Naive thymus-derived CD4-positive, alpha-beta T cell (primary cell): ENCODE measurements at regions of chr11 and their contacts with region 1.

Region 1: DNA sequence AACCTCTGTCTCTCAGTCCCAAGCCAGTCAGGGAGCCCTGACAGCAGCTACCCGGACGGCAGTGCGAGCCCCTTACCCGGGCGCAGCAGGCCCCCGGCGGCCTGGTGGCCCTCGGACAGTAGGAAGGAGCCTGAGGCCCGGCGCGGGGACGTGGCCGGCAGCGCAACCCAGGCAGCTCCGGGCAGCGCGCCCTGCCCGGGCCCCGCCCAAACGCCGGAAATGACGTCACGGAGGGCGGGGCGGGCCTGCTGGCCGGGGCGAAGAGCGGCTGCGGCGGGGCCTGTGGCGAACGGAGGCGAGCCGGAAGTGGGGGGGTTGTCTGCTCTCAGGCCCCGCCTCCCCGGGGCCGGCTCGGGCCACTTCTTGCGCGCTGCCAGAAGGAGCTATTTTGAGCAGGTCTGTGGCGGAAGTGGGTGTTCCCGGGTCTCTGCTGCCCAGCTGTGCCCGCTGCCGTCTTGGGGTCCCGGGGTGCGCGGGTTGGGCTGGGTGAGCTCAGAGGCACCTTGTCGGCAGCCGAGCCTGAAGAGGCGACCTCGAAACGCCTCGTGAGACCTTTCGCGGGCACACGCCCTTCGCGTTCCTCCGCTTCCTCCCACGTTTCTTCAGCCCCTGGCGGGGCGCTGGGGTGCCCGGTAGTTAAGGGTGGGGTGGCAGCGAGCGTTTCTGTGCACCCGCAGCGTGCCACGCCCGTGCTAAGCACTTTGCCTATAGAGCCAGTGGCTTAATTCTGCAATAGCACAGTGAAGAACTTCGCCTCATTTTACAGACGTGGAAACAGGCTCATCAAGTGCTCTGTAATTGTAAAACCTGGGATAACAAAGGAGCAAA is at the start of gene C11orf24:
- DNase-seq: peak; percentile 87 to 98 (median 90)
- ATAC-seq: peak; percentile 94
- H3K4me3 ChIP-seq: peak within 1 kb of the TSS; percentile 77
- H3K4me3 Mint-ChIP-seq: peak within 1 kb of the TSS; percentile 88 to 99 (median 94)
- H3K27ac ChIP-seq: peak within 1 kb of the TSS; percentile 94
- H3K27ac Mint-ChIP-seq: peak within 1 kb of the TSS; percentile 94 to 99 (median 96)
- H3K4me1 ChIP-seq: peaks cover 11 to 12% of the 10 kb centered on the region in 2 donors
- H3K4me1 Mint-ChIP-seq: peaks cover 23 to 50% (median 44%) of the 10 kb centered on the region in 7 donors
- H3K27me3 ChIP-seq: no peaks in the 10 kb centered on the region
- H3K27me3 Mint-ChIP-seq: no peaks in the 10 kb centered on the region
- total RNA-seq, gene C11orf24: 9.5 to 20.0 (median 15.4) TPM

Region 2: DNA sequence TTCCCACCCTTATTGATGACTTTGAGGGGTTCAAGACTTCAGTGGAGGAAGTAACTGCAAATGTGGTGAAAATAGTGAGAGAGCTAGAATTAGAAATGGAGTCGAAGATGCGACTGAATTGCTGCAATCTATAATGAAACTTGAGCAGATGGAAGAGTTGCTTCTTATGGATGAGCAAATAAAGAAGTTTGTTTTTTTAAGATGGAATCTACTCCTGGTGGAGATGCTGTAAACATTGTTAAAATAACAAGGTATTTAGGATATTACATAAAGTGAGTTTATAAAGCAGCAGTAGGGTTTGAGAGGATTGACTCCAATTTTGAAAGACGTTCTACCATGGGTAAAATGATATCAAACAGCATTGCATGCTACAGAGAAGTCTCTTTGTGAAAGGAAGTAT is 1070.0 kb before region 1 on chr11:
- CTCF ChIA-PET with region 1: no interaction called
- POLR2A ChIA-PET with region 1: no interaction called
- intact Hi-C with region 1: no loop called
- DNase-seq: no peak
- ATAC-seq: no peak
- H3K4me3 ChIP-seq: no peak overlapping the region
- H3K4me3 Mint-ChIP-seq: no peak overlapping the region
- H3K27ac ChIP-seq: no peak overlapping the region
- H3K27ac Mint-ChIP-seq: peak overlapping the region in 6 of 9 donors; percentile 1 to 46 (median 32)
- H3K4me1 ChIP-seq: no peaks in the 10 kb centered on the region
- H3K4me1 Mint-ChIP-seq: peaks cover 0 to 3% (median 0%) of the 10 kb centered on the region in 7 donors
- H3K27me3 ChIP-seq: no peaks in the 10 kb centered on the region
- H3K27me3 Mint-ChIP-seq: no peaks in the 10 kb centered on the region

Region 3: GRCh38 chr11:68030318-68031138 is 241.5 kb before region 1 on chr11 and contains the start of gene NDUFS8:
- CTCF ChIA-PET with region 1: no interaction called
- POLR2A ChIA-PET with region 1: no interaction called
- intact Hi-C with region 1: loop called (anchors 1 to 10 kb)
- DNase-seq: peak; percentile 83 to 99 (median 98)
- ATAC-seq: peak; percentile 98
- H3K4me3 ChIP-seq: peak within 1 kb of the TSS; percentile 98
- H3K4me3 Mint-ChIP-seq: peak within 1 kb of the TSS; percentile 90 to 99 (median 96)
- H3K27ac ChIP-seq: peak within 1 kb of the TSS; percentile 97
- H3K27ac Mint-ChIP-seq: peak within 1 kb of the TSS; percentile 73 to 98 (median 92)
- H3K4me1 ChIP-seq: peaks cover 11 to 16% of the 10 kb centered on the region in 2 donors
- H3K4me1 Mint-ChIP-seq: peaks cover 12 to 32% (median 23%) of the 10 kb centered on the region in 7 donors
- H3K27me3 ChIP-seq: no peaks in the 10 kb centered on the region
- H3K27me3 Mint-ChIP-seq: no peaks in the 10 kb centered on the region
- total RNA-seq, gene NDUFS8: 67.1 to 126 (median 80.1) TPM

Region 4: GRCh38 chr11:68213555-68214174 is 58.3 kb before region 1 on chr11:
- CTCF ChIA-PET with region 1: no interaction called
- POLR2A ChIA-PET with region 1: no interaction called
- intact Hi-C with region 1: loop called in 1 of 2 experiments (anchors 1 kb)
- DNase-seq: peak; percentile 69 to 92 (median 86)
- ATAC-seq: peak; percentile 70
- H3K4me3 ChIP-seq: peak overlapping the region; percentile 81
- H3K4me3 Mint-ChIP-seq: peak overlapping the region; percentile 69 to 98 (median 78)
- H3K27ac ChIP-seq: peak overlapping the region; percentile 88
- H3K27ac Mint-ChIP-seq: peak overlapping the region in 7 of 9 donors; percentile 35 to 99 (median 92)
- H3K4me1 ChIP-seq: peaks cover 27% of the 10 kb centered on the region in 2 donors
- H3K4me1 Mint-ChIP-seq: peaks cover 35 to 50% (median 45%) of the 10 kb centered on the region in 7 donors
- H3K27me3 ChIP-seq: no peaks in the 10 kb centered on the region
- H3K27me3 Mint-ChIP-seq: peaks cover 0 to 28% (median 0%) of the 10 kb centered on the region in 5 donors

Region 5: GRCh38 chr11:68282141-68282970 is 10.4 kb after region 1 on chr11:
- CTCF ChIA-PET with region 1: no interaction called
- POLR2A ChIA-PET with region 1: interaction called, 8 read pairs
- intact Hi-C with region 1: loop called (anchors 1 kb)
- DNase-seq: peak in 5 of 9 donors; percentile 21 to 38 (median 31)
- ATAC-seq: peak; percentile 78
- H3K4me3 ChIP-seq: peak overlapping the region; percentile 18
- H3K4me3 Mint-ChIP-seq: peak overlapping the region; percentile 63 to 83 (median 74)
- H3K27ac ChIP-seq: no peak overlapping the region
- H3K27ac Mint-ChIP-seq: peak overlapping the region in 8 of 9 donors; percentile 14 to 87 (median 50)
- H3K4me1 ChIP-seq: peaks cover 13 to 14% of the 10 kb centered on the region in 2 donors
- H3K4me1 Mint-ChIP-seq: peaks cover 18 to 32% (median 25%) of the 10 kb centered on the region in 7 donors
- H3K27me3 ChIP-seq: no peaks in the 10 kb centered on the region
- H3K27me3 Mint-ChIP-seq: peaks cover 0 to 19% (median 2%) of the 10 kb centered on the region in 5 donors

Region 6: DNA sequence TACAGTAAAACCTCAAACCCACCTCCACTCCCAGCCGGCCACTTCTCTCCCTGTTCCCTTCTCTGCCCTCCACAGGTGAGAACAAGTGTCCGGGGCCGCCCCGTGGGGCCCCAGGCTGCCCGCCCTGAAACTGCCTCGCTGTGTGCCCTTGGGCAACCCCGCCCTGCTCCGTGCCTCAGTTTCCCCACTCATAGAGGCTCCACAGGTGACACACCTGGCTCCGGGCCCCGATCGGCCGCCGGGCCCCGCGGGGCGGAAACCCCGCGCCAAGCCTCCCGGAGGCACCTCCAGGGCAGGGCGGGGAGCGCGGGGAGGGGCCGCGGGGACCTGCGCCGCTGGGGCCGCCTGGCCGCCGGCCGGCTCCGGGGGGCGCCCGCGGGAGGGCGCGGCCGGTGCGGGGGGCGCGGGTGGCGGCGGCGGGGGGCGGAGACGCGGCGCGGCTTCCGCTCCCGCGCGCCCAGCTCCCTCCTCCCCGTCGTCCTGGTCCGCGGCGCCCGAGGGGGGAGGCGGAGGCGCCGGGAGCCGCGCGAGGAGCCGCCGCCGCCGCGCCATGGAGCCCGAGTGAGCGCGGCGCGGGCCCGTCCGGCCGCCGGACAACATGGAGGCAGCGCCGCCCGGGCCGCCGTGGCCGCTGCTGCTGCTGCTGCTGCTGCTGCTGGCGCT is 40.3 kb after region 1 on chr11 and contains the start of gene LRP5:
- CTCF ChIA-PET with region 1: interaction called, 3 read pairs
- POLR2A ChIA-PET with region 1: interaction called, 4 read pairs
- intact Hi-C with region 1: loop called in 1 of 2 experiments (anchors 5 kb)
- DNase-seq: peak in 1 of 9 donors; percentile 52
- ATAC-seq: peak; percentile 48
- H3K4me3 ChIP-seq: peak within 1 kb of the TSS; percentile 50
- H3K4me3 Mint-ChIP-seq: peak within 1 kb of the TSS; percentile 86 to 92 (median 88)
- H3K27ac ChIP-seq: no peak within 1 kb of the TSS
- H3K27ac Mint-ChIP-seq: peak within 1 kb of the TSS; percentile 35 to 87 (median 67)
- H3K4me1 ChIP-seq: peaks cover 8 to 22% of the 10 kb centered on the region in 2 donors
- H3K4me1 Mint-ChIP-seq: peaks cover 14 to 47% (median 31%) of the 10 kb centered on the region in 7 donors
- H3K27me3 ChIP-seq: peaks cover 0 to 4% of the 10 kb centered on the region in 2 donors
- H3K27me3 Mint-ChIP-seq: peaks cover 0 to 18% (median 0%) of the 10 kb centered on the region in 5 donors
- total RNA-seq, gene LRP5: 1.4 to 29.9 (median 2.3) TPM

Region 7: DNA sequence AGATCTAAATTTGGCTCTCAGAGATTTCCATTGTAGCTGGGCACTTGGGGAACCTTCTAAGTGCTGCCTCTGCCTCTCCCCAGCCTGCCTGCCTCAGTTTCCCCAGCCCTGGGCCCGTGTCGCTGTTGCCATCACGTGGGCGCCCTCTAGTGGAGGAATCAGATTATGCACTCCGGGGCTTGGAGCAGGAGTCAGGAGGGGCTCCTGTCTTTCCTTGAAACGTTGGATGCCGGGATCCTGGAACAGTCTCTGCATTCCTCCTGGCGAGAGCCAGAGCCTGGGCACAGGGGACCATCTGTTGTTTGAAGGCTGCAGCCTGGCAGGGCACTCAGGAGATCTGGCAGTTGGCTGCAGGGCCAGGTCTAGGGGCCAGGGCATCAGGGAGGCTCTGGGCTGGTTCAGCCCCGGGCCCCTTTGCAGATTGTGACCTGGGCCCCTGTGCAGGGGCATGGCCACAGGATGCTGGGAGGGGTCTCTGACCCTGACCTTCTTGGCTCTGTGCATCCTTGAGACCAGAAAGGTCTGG is 112.0 kb after region 1 on chr11:
- CTCF ChIA-PET with region 1: no interaction called
- POLR2A ChIA-PET with region 1: no interaction called
- intact Hi-C with region 1: loop called in 1 of 2 experiments (anchors 1 kb)
- DNase-seq: peak; percentile 16 to 74 (median 53)
- ATAC-seq: peak; percentile 59
- H3K4me3 ChIP-seq: no peak overlapping the region
- H3K4me3 Mint-ChIP-seq: no peak overlapping the region
- H3K27ac ChIP-seq: no peak overlapping the region
- H3K27ac Mint-ChIP-seq: peak overlapping the region in 1 of 9 donors; percentile 29
- H3K4me1 ChIP-seq: no peaks in the 10 kb centered on the region
- H3K4me1 Mint-ChIP-seq: peaks cover 0 to 42% (median 12%) of the 10 kb centered on the region in 7 donors
- H3K27me3 ChIP-seq: no peaks in the 10 kb centered on the region
- H3K27me3 Mint-ChIP-seq: peaks cover 0 to 13% (median 6%) of the 10 kb centered on the region in 5 donors